Aorta (tissue), 5 donors: ENCODE measurements at regions of chr3 and their contacts with region 1.

Region 1: GRCh38 chr3:5122030-5122740 is at the start of gene ARL8B:
- DNase-seq: peak; percentile 96 to 98
- ATAC-seq: peak; percentile 99
- H3K4me3 ChIP-seq: peak within 1 kb of the TSS; percentile 68 to 94
- H3K27ac ChIP-seq: peak within 1 kb of the TSS; percentile 36 to 81
- H3K4me1 ChIP-seq: peaks cover 0 to 4% of the 10 kb centered on the region in 2 donors
- H3K27me3 ChIP-seq: no peaks in the 10 kb centered on the region
- total RNA-seq, gene ARL8B: 56.0 to 61.3 TPM

Region 2: GRCh38 chr3:5035692-5036391 is 86.3 kb before region 1 on chr3:
- intact Hi-C with region 1: no loop called
- DNase-seq: no peak
- ATAC-seq: no peak
- H3K4me3 ChIP-seq: no peak overlapping the region
- H3K27ac ChIP-seq: no peak overlapping the region
- H3K4me1 ChIP-seq: no peaks in the 10 kb centered on the region
- H3K27me3 ChIP-seq: no peaks in the 10 kb centered on the region

Region 3: GRCh38 chr3:5187156-5187919 is 65.2 kb after region 1 on chr3 and contains the start of gene EDEM1:
- intact Hi-C with region 1: loop called (anchors 1 to 5 kb)
- DNase-seq: peak; percentile 97 to 98
- ATAC-seq: peak; percentile 99
- H3K4me3 ChIP-seq: peak within 1 kb of the TSS; percentile 41 to 99
- H3K27ac ChIP-seq: peak within 1 kb of the TSS; percentile 32 to 64
- H3K4me1 ChIP-seq: peaks cover 3 to 6% of the 10 kb centered on the region in 2 donors
- H3K27me3 ChIP-seq: no peaks in the 10 kb centered on the region
- total RNA-seq, gene EDEM1: 34.4 to 37.9 TPM